Stomach (tissue), 19 donors: ENCODE measurements at regions of chr17 and their contacts with region 1.

Region 1: DNA sequence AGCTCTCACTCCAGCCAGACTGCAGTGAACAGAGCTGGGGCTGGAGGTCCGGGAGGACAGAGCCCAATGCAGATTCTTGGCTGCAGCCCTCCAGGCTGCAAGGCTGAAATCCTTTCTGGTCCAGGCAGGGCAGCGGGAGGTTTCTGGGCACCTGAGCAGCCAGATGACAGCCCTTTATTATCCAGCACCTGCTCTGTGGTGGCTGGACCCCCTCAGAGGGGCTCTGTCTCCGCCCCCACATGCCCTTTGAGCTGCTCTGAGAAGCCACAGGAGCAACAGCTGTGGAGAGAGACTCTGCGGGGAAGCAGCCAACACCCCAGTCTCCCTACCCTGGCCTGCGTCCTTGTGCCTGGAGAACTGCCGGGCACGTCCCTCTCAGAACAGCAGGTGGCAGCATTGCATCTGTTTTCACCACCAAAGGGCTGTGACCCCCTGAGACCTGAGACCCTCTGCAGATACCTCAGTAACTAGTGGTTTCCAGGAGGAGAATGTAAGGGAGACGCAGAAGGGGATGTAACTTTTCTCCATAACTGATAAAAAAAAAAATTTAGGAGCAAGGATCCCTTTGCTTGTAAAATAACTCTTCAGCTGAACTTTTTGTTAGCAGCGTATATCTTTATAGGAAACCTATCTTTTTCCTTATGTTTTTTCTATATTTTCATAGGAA is 3.7 kb upstream of the CNP start:
- DNase-seq: peak; percentile 80 to 92
- H3K4me3 ChIP-seq: no peak overlapping the region
- H3K27ac ChIP-seq: no peak overlapping the region
- H3K4me1 ChIP-seq: peaks cover 16 to 25% (median 24%) of the 10 kb centered on the region in 4 donors
- H3K27me3 ChIP-seq: no peaks in the 10 kb centered on the region
- CTCF ChIP-seq: peak in 5 of 7 experiments; percentile 64 to 90 (median 82)
- EP300 ChIP-seq: no peak
- POLR2A ChIP-seq: no peak

Region 2: GRCh38 chr17:42027961-42028790 is 65.3 kb after region 1 on chr17:
- intact Hi-C with region 1: loop called (anchors 5 kb)
- DNase-seq: peak in 1 of 2 donors; percentile 54
- H3K4me3 ChIP-seq: no peak overlapping the region
- H3K27ac ChIP-seq: no peak overlapping the region
- H3K4me1 ChIP-seq: peaks cover 16 to 29% (median 18%) of the 10 kb centered on the region in 4 donors
- H3K27me3 ChIP-seq: peaks cover 0 to 14% (median 0%) of the 10 kb centered on the region in 3 donors
- CTCF ChIP-seq: peak in 2 of 7 experiments; percentile 15 to 21
- EP300 ChIP-seq: no peak
- POLR2A ChIP-seq: no peak